ENCODE measurements at regions of chr7 and their contacts with region 1.

Region 1: GRCh38 chr7:37545619-37546534 is 97.2 kb upstream of the ELMO1 start:
- DNase-seq: no peak
- ATAC-seq: no peak
- H3K4me3 ChIP-seq: no peak overlapping the region
- H3K27ac ChIP-seq: no peak overlapping the region
- H3K4me1 ChIP-seq: no peaks in the 10 kb centered on the region
- H3K27me3 ChIP-seq: no peaks in the 10 kb centered on the region
- CTCF ChIP-seq: no peak

Region 2: DNA sequence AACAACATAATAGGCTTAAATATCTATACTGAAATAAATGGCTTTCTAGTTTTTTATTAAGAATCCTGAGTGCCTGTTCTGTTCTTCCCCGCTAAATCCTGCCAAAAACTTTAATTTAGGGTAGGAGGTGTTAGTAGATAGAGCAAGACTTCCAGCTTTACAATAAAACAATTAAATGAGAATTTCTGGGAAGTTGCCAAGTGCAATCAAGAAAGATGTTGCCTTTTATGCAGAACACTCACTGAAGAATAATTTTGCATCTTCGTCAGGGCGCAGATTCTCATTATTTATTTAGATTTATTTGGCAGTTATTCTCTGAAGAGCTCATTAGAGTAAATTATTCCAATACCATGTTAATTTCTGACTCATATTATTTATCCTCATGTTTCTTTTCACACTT is 34.5 kb after region 1 on chr7:
- intact Hi-C with region 1: loop called in 1 of 2 experiments (anchors 2 kb)
- DNase-seq: no peak
- ATAC-seq: no peak
- H3K4me3 ChIP-seq: no peak overlapping the region
- H3K27ac ChIP-seq: no peak overlapping the region
- H3K4me1 ChIP-seq: no peaks in the 10 kb centered on the region
- H3K27me3 ChIP-seq: no peaks in the 10 kb centered on the region
- CTCF ChIP-seq: no peak

Measured in psoas muscle (tissue), 8 donors.